B cell (primary cell): ENCODE measurements at regions of chr1 and their contacts with region 1.

Region 1: GRCh38 chr1:190176776-190177175 is 300.9 kb downstream of the BRINP3 start:
- DNase-seq: no peak
- ATAC-seq: no peak
- H3K4me3 ChIP-seq: no peak overlapping the region
- H3K4me3 Mint-ChIP-seq: no peak overlapping the region
- H3K27ac ChIP-seq: no peak overlapping the region
- H3K27ac Mint-ChIP-seq: no peak overlapping the region
- H3K4me1 ChIP-seq: no peaks in the 10 kb centered on the region
- H3K4me1 Mint-ChIP-seq: no peaks in the 10 kb centered on the region
- H3K27me3 ChIP-seq: no peaks in the 10 kb centered on the region
- H3K27me3 Mint-ChIP-seq: no peaks in the 10 kb centered on the region
- CTCF ChIP-seq: no peak

Region 2: DNA sequence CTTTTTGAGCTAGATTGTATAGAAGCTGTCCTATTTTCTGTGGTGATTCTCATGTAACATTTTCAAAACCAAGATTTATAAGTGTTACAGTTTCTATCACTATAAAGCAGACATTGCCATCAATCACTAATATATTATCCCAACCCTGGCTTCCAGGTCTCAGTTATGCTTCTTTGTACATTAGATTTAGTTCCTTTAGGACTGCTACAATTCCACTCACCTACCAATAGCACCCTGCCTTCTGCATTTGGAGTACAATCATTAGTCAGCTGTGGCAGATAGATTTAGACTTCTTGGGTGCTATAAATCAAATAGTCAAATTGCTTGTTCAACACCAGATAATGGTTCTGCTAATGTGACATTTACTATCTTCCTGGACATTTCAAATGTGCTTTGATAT is 19.2 kb after region 1 on chr1:
- CTCF ChIA-PET with region 1: no interaction called
- POLR2A ChIA-PET with region 1: interaction called, 10 read pairs
- intact Hi-C with region 1: no loop called
- DNase-seq: no peak
- ATAC-seq: no peak
- H3K4me3 ChIP-seq: no peak overlapping the region
- H3K4me3 Mint-ChIP-seq: no peak overlapping the region
- H3K27ac ChIP-seq: no peak overlapping the region
- H3K27ac Mint-ChIP-seq: no peak overlapping the region
- H3K4me1 ChIP-seq: no peaks in the 10 kb centered on the region
- H3K4me1 Mint-ChIP-seq: no peaks in the 10 kb centered on the region
- H3K27me3 ChIP-seq: no peaks in the 10 kb centered on the region
- H3K27me3 Mint-ChIP-seq: no peaks in the 10 kb centered on the region
- CTCF ChIP-seq: no peak

Region 3: DNA sequence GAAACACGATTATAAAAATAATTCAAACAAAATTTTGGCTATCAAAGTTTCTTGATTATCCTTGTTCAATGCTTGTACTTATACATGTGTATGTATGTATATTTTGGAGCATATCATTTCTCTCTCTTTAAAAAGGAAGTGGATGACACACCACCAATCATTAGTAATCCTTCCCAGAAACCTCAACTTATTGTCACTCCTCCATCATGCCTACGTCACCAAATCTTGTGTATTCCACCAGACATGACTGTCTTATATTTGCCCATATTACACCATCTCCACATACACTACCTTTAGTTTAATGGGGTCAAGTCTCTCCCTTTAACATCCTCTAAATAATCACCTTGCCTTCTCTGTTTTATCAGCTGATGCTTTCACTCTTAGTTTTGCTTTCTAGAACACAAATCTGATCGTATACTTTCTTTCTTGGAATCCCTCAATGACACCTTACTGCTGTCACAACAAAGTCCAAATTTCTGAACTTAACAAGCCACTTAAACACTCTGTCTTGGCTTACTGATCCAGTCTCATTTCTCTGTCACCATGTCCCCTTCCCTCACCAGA is 176.8 kb after region 1 on chr1:
- CTCF ChIA-PET with region 1: no interaction called
- POLR2A ChIA-PET with region 1: no interaction called
- intact Hi-C with region 1: no loop called
- DNase-seq: no peak
- ATAC-seq: no peak
- H3K4me3 ChIP-seq: no peak overlapping the region
- H3K4me3 Mint-ChIP-seq: no peak overlapping the region
- H3K27ac ChIP-seq: no peak overlapping the region
- H3K27ac Mint-ChIP-seq: no peak overlapping the region
- H3K4me1 ChIP-seq: no peaks in the 10 kb centered on the region
- H3K4me1 Mint-ChIP-seq: no peaks in the 10 kb centered on the region
- H3K27me3 ChIP-seq: no peaks in the 10 kb centered on the region
- H3K27me3 Mint-ChIP-seq: no peaks in the 10 kb centered on the region
- CTCF ChIP-seq: no peak